ENCODE measurements at regions of chr16 and their contacts with region 1.

Region 1: GRCh38 chr16:15874745-15875314 is 13.6 kb downstream of the CEP20 start:
- DNase-seq: peak; percentile 52
- H3K4me3 ChIP-seq: no peak overlapping the region
- H3K27ac ChIP-seq: no peak overlapping the region
- H3K27me3 ChIP-seq: no peaks in the 10 kb centered on the region
- CTCF ChIP-seq: peak; percentile 87

Region 2: DNA sequence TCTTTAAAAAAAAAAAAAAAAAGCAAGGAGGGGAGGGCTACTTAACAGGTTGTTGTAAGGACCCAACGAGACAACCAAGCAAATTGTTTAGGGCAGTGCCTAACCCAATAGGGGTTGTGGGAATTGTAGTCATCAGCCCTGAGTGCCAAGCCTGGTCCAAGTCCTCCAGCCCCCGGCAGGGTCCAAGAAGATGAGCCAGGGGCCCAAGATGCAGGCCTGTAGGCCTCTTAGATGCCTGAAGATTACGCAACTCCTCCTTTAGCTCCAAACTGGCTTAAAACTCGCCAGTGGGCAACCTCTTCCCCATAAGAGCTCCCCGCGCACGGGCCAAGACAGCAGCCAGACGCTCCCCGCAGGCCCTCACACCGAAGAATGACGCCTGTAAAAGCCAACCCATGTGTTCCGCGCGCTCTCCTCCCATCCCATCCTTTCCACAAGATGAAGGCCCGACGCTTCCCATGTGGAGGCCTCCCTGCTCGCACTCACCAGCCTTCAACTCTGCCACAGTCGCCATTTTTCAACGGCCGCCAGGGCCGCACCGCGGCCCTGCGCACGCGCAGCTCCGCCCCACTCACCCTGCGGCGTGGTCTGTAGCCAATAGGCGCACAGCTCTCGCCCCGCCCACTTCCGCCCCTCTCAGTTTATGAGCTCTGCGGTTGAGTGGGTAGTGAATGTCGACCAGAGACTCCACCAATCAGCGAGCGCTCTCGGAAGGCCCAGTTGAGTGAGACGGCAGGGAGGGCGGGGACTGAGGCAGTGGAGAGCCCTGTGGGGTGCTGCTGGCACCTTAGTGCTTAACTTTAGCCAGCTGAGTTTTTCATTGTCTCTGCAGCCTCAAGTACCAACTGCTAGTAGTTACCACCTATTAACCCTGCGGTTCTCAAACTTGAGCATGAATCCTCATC is 13.5 kb after region 1 on chr16 and contains the start of gene CEP20:
- CTCF ChIA-PET with region 1: interaction called, 35 read pairs
- POLR2A ChIA-PET with region 1: interaction called, 8 read pairs
- DNase-seq: peak; percentile 97
- H3K4me3 ChIP-seq: peak within 1 kb of the TSS; percentile 96
- H3K27ac ChIP-seq: peak within 1 kb of the TSS; percentile 85
- H3K27me3 ChIP-seq: no peaks in the 10 kb centered on the region
- CTCF ChIP-seq: peak; percentile 20; the same call in 1 of the 2 replicates
- polyA plus RNA-seq, gene CEP20: 38.9 and 49.3 TPM in 2 replicates

Region 3: GRCh38 chr16:16062023-16062932 is 187.4 kb after region 1 on chr16:
- CTCF ChIA-PET with region 1: interaction called, 10 read pairs
- POLR2A ChIA-PET with region 1: no interaction called
- DNase-seq: no peak
- H3K4me3 ChIP-seq: no peak overlapping the region
- H3K27ac ChIP-seq: no peak overlapping the region
- H3K27me3 ChIP-seq: no peaks in the 10 kb centered on the region
- CTCF ChIP-seq: no peak

Measured in AG04450 (cell line).